Right cardiac atrium (tissue), 5 donors: ENCODE measurements at regions of chr3 and their contacts with region 1.

Region 1: GRCh38 chr3:16550676-16551341 is 37.3 kb upstream of the RFTN1 start:
- DNase-seq: peak; percentile 42 to 61 (median 60)
- ATAC-seq: peak; percentile 76 to 79
- H3K4me3 ChIP-seq: no peak overlapping the region
- H3K27ac ChIP-seq: no peak overlapping the region
- H3K4me1 ChIP-seq: no peaks in the 10 kb centered on the region
- H3K27me3 ChIP-seq: no peaks in the 10 kb centered on the region

Region 2: GRCh38 chr3:16264708-16265454 is 285.9 kb before region 1 on chr3 and contains the starts of genes DPH3 and OXNAD1:
- intact Hi-C with region 1: loop called in 2 of 4 experiments (anchors 2 to 5 kb)
- DNase-seq: peak; percentile 100
- ATAC-seq: peak; percentile 100
- H3K4me3 ChIP-seq: peak within 1 kb of the TSS; percentile 84
- H3K27ac ChIP-seq: peak within 1 kb of the TSS; percentile 94
- H3K4me1 ChIP-seq: peaks cover 3% of the 10 kb centered on the region
- H3K27me3 ChIP-seq: no peaks in the 10 kb centered on the region
- total RNA-seq, gene DPH3: 19.0 to 24.2 (median 21.5) TPM
- total RNA-seq, gene OXNAD1: 13.9 to 14.7 (median 14.3) TPM

Region 3: DNA sequence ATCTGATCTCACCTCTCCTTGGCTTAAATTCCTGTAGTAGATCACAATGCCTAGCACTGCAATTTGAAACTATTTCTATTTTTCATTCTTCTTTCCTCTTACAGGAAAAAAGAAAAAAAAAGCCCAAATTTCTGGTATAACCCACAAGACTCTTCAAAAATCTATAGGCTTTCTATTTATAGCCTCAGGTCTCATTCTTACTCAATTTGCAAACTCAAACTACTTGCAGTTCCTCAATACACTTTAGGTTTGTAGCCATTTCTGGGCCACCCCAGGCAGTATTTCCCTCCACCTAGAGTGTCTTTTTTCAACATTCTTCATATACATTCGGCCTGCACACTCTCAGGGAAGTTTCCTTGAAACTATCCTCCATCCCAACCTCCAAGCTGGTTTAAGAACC is 1022.6 kb after region 1 on chr3:
- intact Hi-C with region 1: no loop called
- DNase-seq: no peak
- ATAC-seq: no peak
- H3K4me3 ChIP-seq: no peak overlapping the region
- H3K27ac ChIP-seq: no peak overlapping the region
- H3K4me1 ChIP-seq: no peaks in the 10 kb centered on the region
- H3K27me3 ChIP-seq: no peaks in the 10 kb centered on the region